Aorta (tissue), 5 donors: ENCODE measurements at regions of chr2 and their contacts with region 1.

Region 1: DNA sequence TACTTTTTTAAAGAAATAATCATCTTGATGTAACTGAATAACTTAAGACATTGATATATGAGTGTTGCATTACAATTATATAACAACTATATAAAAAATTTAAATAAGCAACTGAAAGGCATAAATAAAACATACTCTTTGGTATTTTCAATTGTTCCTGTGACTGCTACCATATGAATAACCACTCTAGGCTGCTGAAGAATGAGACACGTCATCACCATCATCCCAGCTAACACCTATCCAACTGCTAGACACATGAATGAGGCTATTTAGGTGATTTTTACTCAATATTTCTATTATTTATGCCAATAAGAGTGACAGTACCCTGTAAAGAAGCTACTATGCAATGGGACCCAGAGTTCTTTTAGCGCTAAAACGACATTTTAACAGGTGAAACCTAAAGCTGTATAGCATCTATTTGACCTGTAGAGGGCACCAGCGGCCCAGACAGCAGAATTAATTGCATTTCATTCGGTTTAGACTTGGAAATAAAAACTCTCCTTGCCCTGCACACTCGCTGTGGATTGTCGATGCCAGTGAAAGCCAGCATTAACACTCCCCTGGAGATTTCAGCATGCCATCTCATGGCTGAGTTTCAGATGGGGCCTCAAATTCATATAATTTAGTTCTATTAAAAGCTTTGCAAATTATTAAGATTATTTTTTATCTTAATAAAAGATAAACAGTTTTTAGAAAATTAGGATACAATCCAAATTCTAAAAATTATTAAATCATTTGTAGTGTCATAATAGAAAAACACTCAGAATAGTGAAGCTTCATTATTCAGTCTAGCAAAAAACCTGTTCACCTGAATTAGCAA is 89.4 kb upstream of the MAP2 start:
- DNase-seq: peak in 1 of 2 donors; percentile 55
- ATAC-seq: peak; percentile 83
- H3K4me3 ChIP-seq: no peak overlapping the region
- H3K27ac ChIP-seq: no peak overlapping the region
- H3K4me1 ChIP-seq: no peaks in the 10 kb centered on the region
- H3K27me3 ChIP-seq: no peaks in the 10 kb centered on the region

Region 2: DNA sequence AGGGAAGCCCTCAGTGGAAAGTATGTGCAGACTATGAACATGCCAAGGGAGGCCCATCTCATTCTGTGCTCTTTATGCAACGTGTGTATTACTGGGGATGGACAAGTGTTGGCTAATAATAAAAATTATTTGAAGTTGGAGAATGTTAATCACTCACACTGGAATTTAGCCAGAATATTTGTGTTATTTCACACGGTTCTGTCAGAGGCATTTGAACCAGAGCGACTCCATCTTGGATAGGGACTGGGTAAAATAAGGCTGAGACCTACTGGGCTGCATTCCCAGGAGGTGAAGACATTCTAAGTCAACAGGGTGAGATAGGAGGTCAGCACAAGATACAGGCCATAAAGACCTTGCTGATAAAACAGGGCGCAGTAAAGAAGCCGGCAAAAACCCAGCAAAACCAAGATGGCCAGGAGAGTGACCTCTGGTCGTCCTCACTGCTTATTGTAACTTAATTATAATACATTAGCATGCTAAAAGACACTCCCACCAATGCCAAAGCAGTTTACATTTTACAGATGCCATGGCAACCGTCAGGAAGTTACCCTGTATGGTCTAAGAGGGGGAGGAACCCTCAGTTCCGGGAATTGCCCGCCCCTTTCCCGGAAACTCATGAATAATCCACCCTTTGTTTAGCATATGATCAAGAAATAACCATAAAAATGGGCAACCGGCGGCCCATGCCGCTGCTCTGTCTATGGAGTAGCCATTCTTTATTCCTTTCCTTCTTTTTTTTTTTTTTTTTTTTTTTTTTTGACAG is 1562.1 kb before region 1 on chr2:
- intact Hi-C with region 1: no loop called
- DNase-seq: peak; percentile 62 to 79
- ATAC-seq: no peak
- H3K4me3 ChIP-seq: no peak overlapping the region
- H3K27ac ChIP-seq: no peak overlapping the region
- H3K4me1 ChIP-seq: no peaks in the 10 kb centered on the region
- H3K27me3 ChIP-seq: no peaks in the 10 kb centered on the region

Region 3: GRCh38 chr2:209380293-209380692 is 45.9 kb after region 1 on chr2:
- intact Hi-C with region 1: no loop called
- DNase-seq: no peak
- ATAC-seq: no peak
- H3K4me3 ChIP-seq: no peak overlapping the region
- H3K27ac ChIP-seq: no peak overlapping the region
- H3K4me1 ChIP-seq: no peaks in the 10 kb centered on the region
- H3K27me3 ChIP-seq: no peaks in the 10 kb centered on the region

Region 4: GRCh38 chr2:209423562-209424198 is 89.3 kb after region 1 on chr2 and contains the start of gene MAP2:
- intact Hi-C with region 1: loop called (anchors 2 kb)
- DNase-seq: peak; percentile 90 to 96
- ATAC-seq: peak; percentile 96
- H3K4me3 ChIP-seq: peak within 1 kb of the TSS; percentile 50 to 81
- H3K27ac ChIP-seq: peak within 1 kb of the TSS; percentile 30 to 70
- H3K4me1 ChIP-seq: no peaks in the 10 kb centered on the region
- H3K27me3 ChIP-seq: no peaks in the 10 kb centered on the region
- total RNA-seq, gene MAP2: 19.6 to 59.7 TPM

Region 5: DNA sequence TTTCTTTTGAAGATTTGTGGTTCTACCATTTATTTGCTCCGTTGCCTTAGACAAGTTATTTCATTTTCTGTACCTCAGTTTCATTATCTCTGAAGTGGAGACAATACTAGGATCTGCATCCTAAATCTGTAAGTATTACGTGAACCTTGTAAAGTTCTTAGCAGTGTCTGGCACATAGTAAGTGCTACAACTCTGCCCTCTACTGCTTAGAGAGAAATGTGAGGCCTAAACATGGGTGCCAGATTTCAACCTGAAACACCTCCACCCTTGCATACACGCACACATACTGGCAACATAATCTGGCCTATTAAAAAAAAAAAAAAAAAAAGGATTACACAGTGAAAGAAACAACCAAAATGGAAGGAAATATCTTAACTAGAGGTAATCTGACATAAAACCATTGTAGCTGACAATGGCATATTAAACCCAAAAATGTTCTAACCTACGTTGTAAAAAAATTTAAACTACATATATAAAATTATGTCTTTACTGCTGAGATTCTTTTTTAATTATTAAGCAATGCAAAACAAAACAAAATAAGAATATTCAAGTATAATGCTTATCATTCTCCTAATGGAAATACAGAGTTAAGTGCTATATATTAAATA is 222.1 kb after region 1 on chr2:
- intact Hi-C with region 1: loop called in 1 of 2 experiments (anchors 5 kb)
- DNase-seq: no peak
- ATAC-seq: no peak
- H3K4me3 ChIP-seq: no peak overlapping the region
- H3K27ac ChIP-seq: no peak overlapping the region
- H3K4me1 ChIP-seq: no peaks in the 10 kb centered on the region
- H3K27me3 ChIP-seq: no peaks in the 10 kb centered on the region

Region 6: DNA sequence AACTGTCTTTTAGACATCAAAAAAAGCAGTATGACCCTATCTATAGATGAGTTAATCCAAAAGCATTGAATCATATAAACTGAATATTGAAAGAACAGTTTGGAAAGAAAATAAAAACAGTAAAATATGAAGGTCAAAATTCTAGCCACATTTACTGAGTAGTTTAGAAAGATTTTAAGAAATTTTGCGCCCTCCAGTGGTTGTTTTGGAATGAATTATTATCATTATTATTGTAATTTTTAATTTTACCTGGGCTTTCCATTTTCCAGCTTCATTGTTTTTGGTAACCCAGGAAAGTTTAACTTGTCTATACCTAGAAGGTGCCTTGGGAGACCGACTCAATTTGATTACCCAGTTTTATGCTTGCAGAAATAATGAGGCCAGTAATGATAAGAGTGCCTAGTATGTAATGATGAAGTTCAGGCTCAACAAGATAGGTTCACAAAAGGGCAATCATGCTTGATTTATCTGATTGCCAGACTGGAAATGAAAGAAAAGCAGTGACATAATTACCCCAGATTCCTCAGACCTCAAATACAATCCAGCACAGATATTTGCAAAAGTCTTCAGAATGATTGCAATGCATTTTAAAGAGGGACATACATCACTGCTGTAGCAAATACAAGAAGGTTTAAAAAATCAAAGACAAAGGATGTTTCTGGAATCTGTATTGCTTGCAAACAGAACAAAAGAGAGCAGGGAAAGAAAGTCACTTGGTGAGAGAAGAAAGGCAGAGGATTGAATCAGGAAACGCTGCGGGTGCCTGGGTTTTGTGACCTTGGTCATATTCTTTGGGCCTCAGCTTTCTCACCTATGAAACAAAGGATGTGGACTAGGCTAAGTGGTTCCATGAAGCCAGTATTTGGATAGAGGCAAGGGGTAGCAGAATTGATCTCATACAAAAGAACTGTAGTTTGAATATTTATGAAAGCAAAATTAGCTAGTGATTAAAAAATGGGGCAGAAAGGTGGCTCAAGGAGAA is 243.3 kb after region 1 on chr2:
- intact Hi-C with region 1: loop called in 1 of 2 experiments (anchors 5 kb)
- DNase-seq: no peak
- ATAC-seq: no peak
- H3K4me3 ChIP-seq: no peak overlapping the region
- H3K27ac ChIP-seq: no peak overlapping the region
- H3K4me1 ChIP-seq: peaks cover 0 to 3% of the 10 kb centered on the region in 2 donors
- H3K27me3 ChIP-seq: no peaks in the 10 kb centered on the region

Region 7: DNA sequence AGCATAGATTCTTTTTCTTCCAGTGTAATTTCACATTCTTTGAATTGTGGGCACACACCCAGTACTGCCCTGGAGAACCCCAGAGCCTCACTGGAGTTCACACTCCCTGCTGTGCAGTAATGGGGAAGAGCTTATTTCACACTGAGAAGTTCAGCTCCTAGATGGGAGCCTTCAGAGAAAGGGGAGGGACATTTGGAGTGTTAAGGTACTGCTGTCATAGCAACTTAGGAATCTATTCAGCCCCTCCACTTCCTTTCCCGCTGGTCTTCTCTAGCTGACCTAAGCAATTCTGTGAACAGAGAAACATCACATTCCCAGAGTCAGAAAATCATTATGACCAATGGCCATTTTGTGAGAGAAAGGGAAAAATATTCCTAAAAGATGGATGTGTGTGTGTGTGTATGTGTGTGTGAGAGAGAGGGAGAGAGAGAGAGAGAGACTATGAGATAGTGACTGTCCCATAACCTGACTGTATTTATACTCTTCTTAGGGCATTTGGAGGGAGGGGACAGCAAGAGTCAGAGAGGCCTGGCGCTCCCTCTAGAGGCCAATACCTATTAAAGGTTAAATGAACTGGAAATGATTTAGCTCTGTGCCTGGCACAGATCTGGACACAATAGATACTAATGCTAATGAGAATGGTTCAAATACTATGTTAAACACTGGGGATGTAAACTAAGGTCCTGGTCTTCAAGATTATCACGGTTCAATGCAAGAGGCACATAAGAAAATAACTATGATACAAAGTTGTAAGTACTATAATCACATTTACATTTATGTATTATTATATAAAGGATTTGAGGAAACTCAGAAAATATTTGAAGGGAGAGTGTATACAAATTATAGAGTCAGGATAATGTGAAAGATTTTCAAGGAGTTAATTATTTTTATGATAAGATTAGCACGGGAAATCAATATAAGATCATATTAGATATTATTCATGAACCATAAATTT is 626.5 kb after region 1 on chr2:
- intact Hi-C with region 1: loop called in 1 of 2 experiments (anchors 10 kb)
- DNase-seq: no peak
- ATAC-seq: peak; percentile 75
- H3K4me3 ChIP-seq: no peak overlapping the region
- H3K27ac ChIP-seq: no peak overlapping the region
- H3K4me1 ChIP-seq: peaks cover 0 to 2% of the 10 kb centered on the region in 2 donors
- H3K27me3 ChIP-seq: no peaks in the 10 kb centered on the region